ENCODE measurements at regions of chr5 and their contacts with region 1.

Region 1: DNA sequence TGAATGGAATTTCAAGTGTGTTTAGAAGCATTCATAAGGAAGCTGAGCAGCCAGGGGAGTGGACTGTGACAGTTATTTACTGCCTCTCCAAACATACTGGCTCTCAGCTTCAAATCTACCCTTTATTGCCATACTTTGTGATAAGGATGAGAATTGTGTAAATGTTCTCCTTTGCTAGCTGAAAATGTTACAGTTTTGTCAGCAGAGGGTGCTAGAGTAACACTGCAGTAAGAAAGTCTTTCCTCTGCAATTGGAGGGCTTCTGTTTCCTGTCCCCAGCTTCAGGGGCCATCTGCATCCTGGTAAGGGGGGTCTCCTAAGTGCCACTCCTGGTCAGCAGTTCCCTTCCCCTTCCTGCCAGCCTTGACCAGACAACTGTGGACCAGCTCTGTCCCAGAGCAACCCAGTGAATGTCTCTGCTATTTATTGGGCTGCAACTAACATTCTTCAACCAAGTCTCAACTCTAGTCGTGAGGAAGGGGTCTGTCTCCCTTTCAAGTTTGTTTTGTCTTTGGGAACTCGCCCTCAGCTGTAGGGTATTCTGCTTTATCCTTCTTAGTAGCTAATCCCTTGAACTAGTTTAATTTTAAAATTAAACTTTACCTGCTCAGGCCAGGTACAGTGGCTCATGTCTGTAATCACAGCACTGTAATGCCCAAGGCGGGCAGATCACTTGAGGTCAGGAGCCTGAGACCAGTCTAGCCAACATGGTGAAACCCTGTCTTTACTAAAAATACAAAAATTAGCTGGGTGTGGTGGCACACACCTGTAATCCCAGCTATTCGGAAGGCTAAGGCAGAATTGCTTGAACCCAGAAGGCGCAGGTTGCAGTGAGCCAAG is 45.3 kb downstream of the RAPGEF6 start:
- DNase-seq: peak in 19 of 35 experiments; percentile 1 to 78 (median 12)
- ATAC-seq: peak; percentile 48 to 78 (median 72)
- H3K4me3 ChIP-seq: no peak overlapping the region
- H3K4me3 Mint-ChIP-seq: no peak overlapping the region
- H3K27ac ChIP-seq: no peak overlapping the region
- H3K27ac Mint-ChIP-seq: peak overlapping the region in 1 of 2 donors; percentile 68
- H3K4me1 ChIP-seq: peaks cover 5 to 16% of the 10 kb centered on the region in 2 experiments
- H3K4me1 Mint-ChIP-seq: peaks cover 35 to 56% (median 54%) of the 10 kb centered on the region in 3 donors
- H3K27me3 ChIP-seq: no peaks in the 10 kb centered on the region
- H3K27me3 Mint-ChIP-seq: no peaks in the 10 kb centered on the region

Region 2: GRCh38 chr5:131156385-131156784 is 433.3 kb before region 1 on chr5:
- CTCF ChIA-PET with region 1: no interaction called
- POLR2A ChIA-PET with region 1: no interaction called
- DNase-seq: no peak
- ATAC-seq: peak in 1 of 4 experiments; percentile 13
- H3K4me3 ChIP-seq: no peak overlapping the region
- H3K4me3 Mint-ChIP-seq: no peak overlapping the region
- H3K27ac ChIP-seq: no peak overlapping the region
- H3K27ac Mint-ChIP-seq: peak overlapping the region; percentile 59 to 80
- H3K4me1 ChIP-seq: peaks cover 0 to 8% of the 10 kb centered on the region in 2 experiments
- H3K4me1 Mint-ChIP-seq: peaks cover 15 to 42% (median 36%) of the 10 kb centered on the region in 3 donors
- H3K27me3 ChIP-seq: no peaks in the 10 kb centered on the region
- H3K27me3 Mint-ChIP-seq: no peaks in the 10 kb centered on the region

Region 3: DNA sequence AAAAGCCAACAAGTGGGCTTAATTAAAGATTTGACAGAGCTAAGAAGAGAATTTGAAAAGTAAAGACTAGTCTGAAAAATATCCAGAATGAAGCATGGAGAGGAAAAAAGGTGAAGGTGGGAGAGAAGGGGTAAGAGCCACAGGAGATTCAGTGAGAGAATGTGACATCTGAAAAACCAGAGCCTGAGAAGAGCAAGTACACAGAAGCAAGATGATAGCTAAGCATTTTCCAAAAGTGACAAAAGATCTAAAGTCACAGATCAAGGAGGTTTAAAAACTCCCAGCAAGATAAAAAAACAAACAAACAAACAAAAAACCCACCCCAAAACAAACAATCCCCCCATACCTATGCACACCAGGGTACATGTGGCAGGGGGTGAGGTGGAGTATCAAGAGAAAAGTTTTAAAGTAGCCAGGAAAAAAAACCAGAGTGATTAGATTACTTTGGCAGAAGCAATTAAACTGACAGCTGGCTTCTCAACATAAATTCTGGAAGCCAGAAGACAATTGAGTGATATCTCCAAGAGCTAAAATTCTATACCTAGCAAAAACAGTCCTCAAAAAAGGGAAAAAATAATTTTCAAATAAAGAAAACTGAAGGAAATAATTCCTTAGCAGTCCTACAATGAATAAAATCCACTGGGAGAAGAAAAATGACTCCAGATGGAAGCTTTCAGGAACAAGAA is 66.1 kb before region 1 on chr5:
- CTCF ChIA-PET with region 1: no interaction called
- POLR2A ChIA-PET with region 1: interaction called in 1 of 2 experiments, 16 read pairs
- DNase-seq: no peak
- ATAC-seq: no peak
- H3K4me3 ChIP-seq: no peak overlapping the region
- H3K4me3 Mint-ChIP-seq: peak overlapping the region in 1 of 3 donors; percentile 9
- H3K27ac ChIP-seq: no peak overlapping the region
- H3K27ac Mint-ChIP-seq: peak overlapping the region in 1 of 2 donors; percentile 45
- H3K4me1 ChIP-seq: peaks cover 12% of the 10 kb centered on the region in 2 experiments
- H3K4me1 Mint-ChIP-seq: peaks cover 76 to 81% (median 76%) of the 10 kb centered on the region in 3 donors
- H3K27me3 ChIP-seq: no peaks in the 10 kb centered on the region
- H3K27me3 Mint-ChIP-seq: no peaks in the 10 kb centered on the region

Region 4: GRCh38 chr5:131533836-131534235 is 55.9 kb before region 1 on chr5:
- CTCF ChIA-PET with region 1: interaction called in 1 of 2 experiments, 12 read pairs
- POLR2A ChIA-PET with region 1: no interaction called
- DNase-seq: peak in 1 of 35 experiments; percentile 46
- ATAC-seq: no peak
- H3K4me3 ChIP-seq: no peak overlapping the region
- H3K4me3 Mint-ChIP-seq: peak overlapping the region in 2 of 3 donors; percentile 11 to 72
- H3K27ac ChIP-seq: peak overlapping the region; percentile 33
- H3K27ac Mint-ChIP-seq: peak overlapping the region; percentile 73 to 90
- H3K4me1 ChIP-seq: peaks cover 26 to 74% of the 10 kb centered on the region in 2 experiments
- H3K4me1 Mint-ChIP-seq: peaks cover 80 to 84% (median 81%) of the 10 kb centered on the region in 3 donors
- H3K27me3 ChIP-seq: no peaks in the 10 kb centered on the region
- H3K27me3 Mint-ChIP-seq: no peaks in the 10 kb centered on the region

Region 5: DNA sequence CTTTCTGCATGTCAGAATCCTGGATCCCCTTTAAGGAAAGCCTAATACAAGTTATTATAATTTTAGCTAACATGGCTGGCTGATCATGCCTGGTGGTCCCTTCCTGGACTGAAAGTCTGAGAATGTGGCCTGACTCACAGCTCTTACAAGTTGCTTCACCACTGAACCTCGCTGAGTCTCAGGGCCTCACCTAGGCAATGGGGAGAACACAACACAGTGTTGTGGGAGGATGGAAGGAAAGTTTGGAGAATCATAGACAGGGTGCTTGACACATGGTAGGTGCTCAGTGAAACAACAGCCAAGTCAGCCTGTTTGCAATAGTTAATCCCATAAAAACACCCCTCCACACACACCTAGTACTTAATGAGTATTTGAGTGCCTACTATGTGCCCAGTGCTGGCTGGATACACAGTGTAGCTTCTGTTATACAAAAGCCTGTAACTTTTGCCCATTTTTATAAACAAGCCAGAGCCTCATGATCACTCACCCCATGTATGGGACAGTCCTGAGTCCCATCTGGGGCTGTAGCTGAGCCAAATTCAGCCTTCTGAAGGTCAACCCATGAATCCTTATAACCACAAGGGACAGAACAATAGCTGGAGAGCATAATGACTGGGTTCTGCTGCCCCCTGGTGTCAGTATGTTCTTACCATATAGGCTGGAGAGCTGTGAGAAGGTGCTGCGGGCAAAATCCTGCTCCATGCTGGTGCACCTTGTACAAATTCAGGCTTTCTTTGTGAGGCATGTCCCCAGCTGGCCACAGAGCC is 417.9 kb after region 1 on chr5:
- CTCF ChIA-PET with region 1: interaction called, 82 to 169 read pairs
- POLR2A ChIA-PET with region 1: interaction called in 1 of 2 experiments, 5 read pairs
- DNase-seq: peak; percentile 30 to 87 (median 65)
- ATAC-seq: peak; percentile 46 to 73 (median 55)
- H3K4me3 ChIP-seq: no peak overlapping the region
- H3K4me3 Mint-ChIP-seq: no peak overlapping the region
- H3K27ac ChIP-seq: no peak overlapping the region
- H3K27ac Mint-ChIP-seq: no peak overlapping the region
- H3K4me1 ChIP-seq: peaks cover 0 to 33% of the 10 kb centered on the region in 2 experiments
- H3K4me1 Mint-ChIP-seq: peaks cover 33 to 46% (median 33%) of the 10 kb centered on the region in 3 donors
- H3K27me3 ChIP-seq: peaks cover 0 to 39% of the 10 kb centered on the region in 2 experiments
- H3K27me3 Mint-ChIP-seq: peaks cover 8 to 18% of the 10 kb centered on the region in 2 donors

Region 6: GRCh38 chr5:132063090-132063911 is 473.6 kb after region 1 on chr5:
- CTCF ChIA-PET with region 1: interaction called, 7 to 33 read pairs
- POLR2A ChIA-PET with region 1: no interaction called
- DNase-seq: peak; percentile 30 to 84 (median 68)
- ATAC-seq: peak; percentile 44 to 73 (median 57)
- H3K4me3 ChIP-seq: no peak overlapping the region
- H3K4me3 Mint-ChIP-seq: no peak overlapping the region
- H3K27ac ChIP-seq: no peak overlapping the region
- H3K27ac Mint-ChIP-seq: peak overlapping the region in 1 of 2 donors; percentile 49
- H3K4me1 ChIP-seq: peaks cover 0 to 31% of the 10 kb centered on the region in 2 experiments
- H3K4me1 Mint-ChIP-seq: peaks cover 0 to 34% (median 21%) of the 10 kb centered on the region in 3 donors
- H3K27me3 ChIP-seq: no peaks in the 10 kb centered on the region
- H3K27me3 Mint-ChIP-seq: no peaks in the 10 kb centered on the region